Gastrocnemius medialis (tissue), 4 donors: ENCODE measurements at regions of chr10 and their contacts with region 1.

Region 1: DNA sequence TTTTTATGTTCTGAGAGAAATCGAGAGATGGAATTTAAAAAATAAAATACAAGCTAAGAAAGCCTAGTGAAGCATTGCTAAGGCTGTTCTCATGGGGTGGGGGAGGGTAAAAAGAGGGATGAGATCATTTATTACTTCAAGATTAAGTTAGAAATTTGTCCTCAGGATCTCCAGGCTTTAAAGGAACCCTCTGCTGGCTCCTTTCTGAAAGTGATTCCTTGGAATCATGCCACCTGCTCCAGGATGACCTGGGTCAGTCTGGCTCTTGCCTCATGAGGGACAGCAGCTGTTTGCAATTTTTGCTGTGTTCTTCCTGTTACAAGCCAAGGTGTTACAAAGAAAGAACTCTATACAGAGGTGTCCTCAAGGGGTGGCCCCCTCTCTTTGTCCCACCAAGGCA is 69.8 kb downstream of the CDK1 start:
- DNase-seq: peak; percentile 79 to 89
- ATAC-seq: peak; percentile 66 to 81
- H3K4me3 ChIP-seq: no peak overlapping the region
- H3K27ac ChIP-seq: peak overlapping the region; percentile 86 to 91 (median 88)
- H3K4me1 ChIP-seq: peaks cover 46 to 51% of the 10 kb centered on the region in 2 donors
- H3K27me3 ChIP-seq: no peaks in the 10 kb centered on the region
- CTCF ChIP-seq: peak in 4 of 5 experiments; percentile 15 to 49 (median 38)
- POLR2A ChIP-seq: no peak

Region 2: GRCh38 chr10:60870424-60870728 is 22.2 kb after region 1 on chr10:
- in situ Hi-C with region 1: no loop called
- intact Hi-C with region 1: loop called (anchors 2 kb)
- DNase-seq: no peak
- ATAC-seq: no peak
- H3K4me3 ChIP-seq: no peak overlapping the region
- H3K27ac ChIP-seq: peak overlapping the region; percentile 86 to 96 (median 90)
- H3K4me1 ChIP-seq: peaks cover 62 to 71% of the 10 kb centered on the region in 2 donors
- H3K27me3 ChIP-seq: no peaks in the 10 kb centered on the region
- CTCF ChIP-seq: peak in 3 of 5 experiments; percentile 23 to 49 (median 33)
- POLR2A ChIP-seq: no peak

Region 3: GRCh38 chr10:60894786-60895185 is 46.7 kb after region 1 on chr10:
- in situ Hi-C with region 1: no loop called
- intact Hi-C with region 1: loop called (anchors 5 kb)
- DNase-seq: no peak
- ATAC-seq: no peak
- H3K4me3 ChIP-seq: no peak overlapping the region
- H3K27ac ChIP-seq: peak overlapping the region; percentile 81 to 96 (median 86)
- H3K4me1 ChIP-seq: peaks cover 57 to 61% of the 10 kb centered on the region in 2 donors
- H3K27me3 ChIP-seq: no peaks in the 10 kb centered on the region
- CTCF ChIP-seq: no peak
- POLR2A ChIP-seq: no peak

Region 4: DNA sequence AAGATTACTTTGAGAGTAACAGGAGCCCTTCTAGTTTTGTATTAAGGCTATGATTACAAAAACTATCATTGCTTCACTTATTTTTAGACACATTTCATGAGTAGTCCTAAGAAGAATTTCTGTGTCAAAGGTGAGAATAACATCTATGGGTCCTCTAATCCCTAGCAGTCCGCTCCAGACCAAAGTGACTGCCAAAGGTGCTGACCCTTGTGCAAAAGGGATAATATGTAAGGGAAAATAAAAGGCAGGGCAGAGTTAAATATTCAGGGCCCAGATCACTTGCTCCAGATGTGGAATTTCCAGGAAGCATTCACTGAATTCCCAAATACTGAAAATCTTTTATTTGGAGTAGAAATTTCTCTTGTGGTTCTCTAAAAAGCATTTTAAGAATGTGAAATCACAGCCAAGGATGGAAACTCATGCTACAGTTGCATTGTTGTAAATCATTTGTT is 66.6 kb after region 1 on chr10:
- in situ Hi-C with region 1: no loop called
- intact Hi-C with region 1: no loop called
- DNase-seq: peak in 1 of 2 donors; percentile 49
- ATAC-seq: peak; percentile 83 to 85
- H3K4me3 ChIP-seq: peak overlapping the region in 1 of 4 donors; percentile 24
- H3K27ac ChIP-seq: peak overlapping the region; percentile 82 to 96 (median 88)
- H3K4me1 ChIP-seq: peaks cover 61 to 70% of the 10 kb centered on the region in 2 donors
- H3K27me3 ChIP-seq: no peaks in the 10 kb centered on the region
- CTCF ChIP-seq: no peak
- POLR2A ChIP-seq: peak in 1 of 2 donors; percentile 36

Region 5: DNA sequence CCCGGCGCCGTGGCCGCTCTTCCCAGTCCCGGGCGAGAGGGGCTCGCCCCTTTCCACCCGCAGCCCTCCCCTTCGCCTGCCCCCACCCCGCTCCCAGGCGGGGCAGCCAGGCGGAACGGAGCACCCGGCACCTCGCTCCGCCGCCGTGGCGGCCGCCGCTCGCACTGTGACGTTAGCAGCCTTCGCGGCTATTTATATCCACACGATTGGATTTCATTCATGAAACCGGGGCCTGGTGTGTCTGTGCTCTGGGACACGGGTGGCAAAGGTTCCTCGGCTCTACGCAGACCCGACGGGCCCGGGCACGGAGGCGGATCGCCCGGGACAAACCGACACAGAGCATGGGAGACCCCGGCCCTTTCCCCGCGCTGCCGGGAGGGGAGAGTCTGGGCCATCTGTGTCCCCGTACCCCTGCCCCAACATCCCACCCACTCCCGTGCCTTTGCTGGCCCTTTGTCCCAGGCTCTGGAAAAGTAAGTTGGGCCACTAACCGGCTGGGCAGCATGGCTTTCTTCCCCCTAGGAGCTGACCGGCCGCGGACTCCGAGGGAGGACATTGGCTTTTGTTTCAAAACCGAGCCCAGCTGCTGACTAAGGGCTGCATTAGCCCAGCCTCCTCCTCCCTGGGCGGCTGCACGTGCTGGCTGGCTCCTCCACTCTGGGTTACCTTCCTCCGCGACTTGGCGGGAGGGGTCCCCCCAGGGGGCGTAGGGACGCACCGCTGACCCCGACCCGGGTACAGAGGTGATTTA is 96.2 kb after region 1 on chr10 and contains the start of gene RHOBTB1:
- in situ Hi-C with region 1: no loop called
- intact Hi-C with region 1: loop called (anchors 1 kb)
- DNase-seq: peak; percentile 72 to 87
- ATAC-seq: peak; percentile 84 to 87
- H3K4me3 ChIP-seq: peak within 1 kb of the TSS; percentile 87 to 93 (median 90)
- H3K27ac ChIP-seq: peak within 1 kb of the TSS; percentile 97 to 100 (median 99)
- H3K4me1 ChIP-seq: peaks cover 27 to 44% of the 10 kb centered on the region in 2 donors
- H3K27me3 ChIP-seq: no peaks in the 10 kb centered on the region
- CTCF ChIP-seq: no peak
- POLR2A ChIP-seq: peak; percentile 97 to 98
- total RNA-seq, gene RHOBTB1: 22.2 to 47.7 (median 33.5) TPM

Region 6: DNA sequence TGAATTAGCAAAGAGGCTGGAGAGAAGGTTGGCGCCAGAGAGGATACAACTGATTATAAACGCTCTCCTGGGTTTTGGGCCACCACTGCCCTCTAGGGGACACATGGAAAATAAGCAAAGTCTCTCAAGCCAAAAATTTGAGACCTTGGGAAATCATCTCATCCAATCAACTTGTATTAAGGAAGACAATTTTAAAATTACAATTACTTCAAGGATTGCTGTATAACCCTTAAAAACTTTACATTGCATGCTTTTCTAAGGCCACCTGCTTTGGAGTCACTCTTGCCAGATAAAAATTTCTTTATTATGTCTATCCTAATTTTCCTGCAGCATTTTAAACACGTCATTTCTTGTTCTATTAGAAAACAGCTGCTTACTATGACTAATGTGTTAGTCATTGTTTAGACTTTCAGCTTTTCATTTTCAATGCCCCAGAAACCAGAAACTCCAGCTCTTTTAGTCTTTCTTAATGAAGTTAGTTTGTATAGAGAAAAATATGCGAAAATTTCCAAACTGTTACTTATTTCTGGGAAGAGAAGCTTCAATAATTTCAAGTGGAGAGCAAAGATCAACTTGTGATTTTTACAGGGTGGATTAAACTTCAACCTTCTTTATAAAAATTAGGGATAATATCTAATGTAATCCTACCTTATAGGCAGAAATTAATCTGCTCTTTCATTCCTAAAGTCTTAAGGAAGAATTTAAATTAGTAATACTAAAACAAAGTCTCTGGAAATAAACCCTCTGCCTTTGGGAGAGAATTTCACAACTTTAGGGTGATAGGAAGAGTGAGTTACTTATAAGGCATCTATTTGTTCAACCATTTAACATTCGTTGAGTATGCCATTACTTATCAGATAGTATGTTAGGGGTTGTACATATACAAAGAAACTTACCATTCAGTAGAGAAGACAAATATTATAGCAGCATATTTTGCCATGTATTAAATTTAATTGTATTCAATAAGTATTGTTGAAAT is 116.4 kb after region 1 on chr10:
- in situ Hi-C with region 1: no loop called
- intact Hi-C with region 1: loop called (anchors 1 kb)
- DNase-seq: peak; percentile 57 to 65
- ATAC-seq: peak; percentile 92
- H3K4me3 ChIP-seq: no peak overlapping the region
- H3K27ac ChIP-seq: peak overlapping the region in 3 of 4 donors; percentile 49 to 60 (median 53)
- H3K4me1 ChIP-seq: peaks cover 6 to 14% of the 10 kb centered on the region in 2 donors
- H3K27me3 ChIP-seq: no peaks in the 10 kb centered on the region
- CTCF ChIP-seq: peak; percentile 78 to 86 (median 80)
- POLR2A ChIP-seq: no peak